PC-9 (cell line): ENCODE measurements at regions of chr2 and their contacts with region 1.

Region 1: DNA sequence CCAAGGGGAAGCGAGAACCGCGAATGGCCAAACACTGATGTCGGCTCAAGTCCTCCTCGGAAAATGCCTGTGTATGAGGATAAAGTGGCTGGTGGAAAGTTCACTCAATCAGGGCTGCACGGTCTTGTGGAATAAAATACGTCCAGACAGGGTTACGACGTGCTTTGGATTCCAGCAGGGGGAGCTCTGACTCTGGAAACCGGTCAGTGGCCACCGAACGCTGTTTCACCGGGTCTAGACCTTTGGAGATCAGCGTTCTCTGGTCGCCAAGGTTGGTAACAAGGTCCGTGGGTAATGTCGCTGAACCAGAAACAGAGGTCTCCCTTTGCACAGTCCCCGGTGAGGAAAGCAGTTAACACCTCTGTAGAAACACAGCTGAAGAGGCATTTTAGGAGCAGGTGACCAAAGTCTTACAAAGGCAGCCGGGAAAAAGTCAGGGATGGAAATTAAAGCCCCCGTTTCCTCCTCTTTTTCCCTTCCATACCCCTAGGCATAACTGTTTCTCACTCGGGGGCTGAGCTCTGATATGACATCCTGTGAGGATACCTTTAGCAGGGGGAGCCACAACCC is 47.8 kb downstream of the CDCA7 start:
- DNase-seq: peak; percentile 79 to 88
- H3K4me3 ChIP-seq: peak overlapping the region; percentile 38; the same call in 1 of the 2 replicates
- H3K27ac ChIP-seq: no peak overlapping the region
- H3K4me1 ChIP-seq: peaks cover 11% of the 10 kb centered on the region; the same call in 1 of the 2 replicates
- H3K27me3 ChIP-seq: peaks cover 24% of the 10 kb centered on the region; the same call in 1 of the 2 replicates
- CTCF ChIP-seq: peak; percentile 99

Region 2: GRCh38 chr2:172806493-172806892 is 596.0 kb before region 1 on chr2:
- CTCF ChIA-PET with region 1: no interaction called
- POLR2A ChIA-PET with region 1: no interaction called
- intact Hi-C with region 1: loop called (anchors 1 kb)
- DNase-seq: peak; percentile 23 to 68
- H3K4me3 ChIP-seq: no peak overlapping the region
- H3K27ac ChIP-seq: no peak overlapping the region
- H3K4me1 ChIP-seq: no peaks in the 10 kb centered on the region
- H3K27me3 ChIP-seq: no peaks in the 10 kb centered on the region
- CTCF ChIP-seq: peak; percentile 100

Region 3: GRCh38 chr2:173210270-173211196 is 192.0 kb before region 1 on chr2:
- CTCF ChIA-PET with region 1: no interaction called
- POLR2A ChIA-PET with region 1: no interaction called
- intact Hi-C with region 1: loop called (anchors 5 kb)
- DNase-seq: peak; percentile 70 to 85
- H3K4me3 ChIP-seq: no peak overlapping the region
- H3K27ac ChIP-seq: peak overlapping the region; percentile 39
- H3K4me1 ChIP-seq: peaks cover 13% of the 10 kb centered on the region
- H3K27me3 ChIP-seq: no peaks in the 10 kb centered on the region
- CTCF ChIP-seq: peak; percentile 99

Region 4: DNA sequence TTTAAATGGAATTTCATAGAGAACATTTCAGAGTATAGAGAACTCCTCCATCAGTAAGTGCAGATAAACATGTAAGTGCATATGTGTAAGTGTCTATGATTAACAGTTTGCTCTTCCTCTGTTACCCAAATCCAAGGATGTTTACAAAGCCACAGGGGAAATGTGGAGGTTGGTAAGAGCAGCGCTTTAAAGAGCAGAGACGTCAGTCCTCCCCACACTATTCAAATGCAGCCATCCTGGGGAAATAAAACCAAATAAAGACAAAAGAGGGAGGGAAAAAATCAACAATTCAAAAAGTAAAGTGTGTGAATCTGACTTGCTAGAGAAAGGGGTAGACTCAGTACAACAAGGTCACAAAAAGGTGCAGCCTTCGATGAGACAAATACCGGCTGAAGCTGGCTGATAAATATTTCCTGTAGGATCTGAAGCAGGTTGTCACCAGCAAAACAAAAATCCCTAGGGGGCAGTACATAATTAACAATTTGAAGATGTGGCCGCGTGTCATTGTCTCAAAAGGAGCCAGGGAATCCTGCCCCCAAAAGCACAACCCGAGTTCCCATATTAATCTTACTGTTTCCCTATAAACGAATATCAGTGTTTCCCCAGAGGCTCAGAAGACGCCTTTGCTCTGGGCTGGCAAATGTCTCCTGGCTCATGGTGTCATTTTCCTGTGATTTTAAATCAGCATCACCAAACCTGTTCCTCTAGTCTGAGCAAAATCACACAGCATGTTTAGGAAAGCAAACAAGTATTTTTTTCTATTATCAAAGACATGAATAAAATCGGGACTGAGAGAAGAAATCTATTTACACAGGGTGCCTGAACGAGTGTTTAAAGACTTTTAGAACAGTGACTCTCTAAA is 168.8 kb after region 1 on chr2:
- CTCF ChIA-PET with region 1: no interaction called
- POLR2A ChIA-PET with region 1: no interaction called
- intact Hi-C with region 1: loop called (anchors 1 kb)
- DNase-seq: peak; percentile 59 to 87
- H3K4me3 ChIP-seq: peak overlapping the region; percentile 22; the same call in 1 of the 2 replicates
- H3K27ac ChIP-seq: peak overlapping the region; percentile 58
- H3K4me1 ChIP-seq: peaks cover 30% of the 10 kb centered on the region
- H3K27me3 ChIP-seq: peaks cover 5% of the 10 kb centered on the region; the same call in 1 of the 2 replicates
- CTCF ChIP-seq: peak; percentile 75

Region 5: DNA sequence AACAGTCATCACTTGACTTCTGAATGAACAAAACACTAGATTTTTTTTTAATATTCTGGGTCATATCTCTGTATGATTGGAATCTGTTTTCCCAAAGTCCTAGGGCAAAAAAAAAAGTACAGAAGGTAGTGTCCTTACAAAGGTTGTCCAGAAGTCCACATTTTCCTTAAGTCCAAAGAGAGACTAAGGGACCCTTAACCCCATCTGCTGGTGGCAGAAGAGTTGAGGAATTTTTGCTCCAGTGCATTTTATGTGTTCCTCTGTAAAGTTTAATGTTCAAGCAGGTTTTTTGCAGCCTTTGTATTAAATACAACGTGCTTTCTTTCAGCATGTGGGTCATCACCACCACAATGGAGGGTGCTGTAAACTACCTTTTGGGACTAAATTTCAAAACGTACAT is 346.8 kb after region 1 on chr2:
- CTCF ChIA-PET with region 1: no interaction called
- POLR2A ChIA-PET with region 1: no interaction called
- intact Hi-C with region 1: loop called (anchors 1 kb)
- DNase-seq: no peak
- H3K4me3 ChIP-seq: no peak overlapping the region
- H3K27ac ChIP-seq: no peak overlapping the region
- H3K4me1 ChIP-seq: no peaks in the 10 kb centered on the region
- H3K27me3 ChIP-seq: peaks cover 29% of the 10 kb centered on the region; the same call in 1 of the 2 replicates
- CTCF ChIP-seq: peak; percentile 65

Region 6: GRCh38 chr2:174039551-174040416 is 637.3 kb after region 1 on chr2:
- CTCF ChIA-PET with region 1: no interaction called
- POLR2A ChIA-PET with region 1: no interaction called
- intact Hi-C with region 1: loop called (anchors 2 kb)
- DNase-seq: peak; percentile 90 to 94
- H3K4me3 ChIP-seq: no peak overlapping the region
- H3K27ac ChIP-seq: peak overlapping the region; percentile 43
- H3K4me1 ChIP-seq: peaks cover 5% of the 10 kb centered on the region
- H3K27me3 ChIP-seq: no peaks in the 10 kb centered on the region
- CTCF ChIP-seq: peak; percentile 98